Common myeloid progenitor, CD34-positive (primary cell): ENCODE measurements at regions of chr2 and their contacts with region 1.

Region 1: GRCh38 chr2:74876081-74876886 is 42.4 kb downstream of the HK2 start:
- DNase-seq: peak; percentile 61 to 78 (median 74)
- H3K4me3 ChIP-seq: no peak overlapping the region
- H3K27ac ChIP-seq: peak overlapping the region in 1 of 2 experiments; percentile 8
- H3K4me1 ChIP-seq: peaks cover 4 to 14% (median 6%) of the 10 kb centered on the region in 4 experiments
- H3K27me3 ChIP-seq: no peaks in the 10 kb centered on the region

Region 2: GRCh38 chr2:74690571-74690970 is 185.7 kb before region 1 on chr2:
- CTCF ChIA-PET with region 1: interaction called, 74 read pairs
- POLR2A ChIA-PET with region 1: no interaction called
- DNase-seq: peak; percentile 59 to 81 (median 70)
- H3K4me3 ChIP-seq: no peak overlapping the region
- H3K27ac ChIP-seq: no peak overlapping the region
- H3K4me1 ChIP-seq: peaks cover 0 to 11% (median 2%) of the 10 kb centered on the region in 4 experiments
- H3K27me3 ChIP-seq: no peaks in the 10 kb centered on the region

Region 3: GRCh38 chr2:74715078-74715791 is 161.0 kb before region 1 on chr2:
- CTCF ChIA-PET with region 1: interaction called, 132 read pairs
- POLR2A ChIA-PET with region 1: no interaction called
- DNase-seq: peak; percentile 75 to 87 (median 84)
- H3K4me3 ChIP-seq: peak overlapping the region; percentile 27 to 78 (median 71)
- H3K27ac ChIP-seq: no peak overlapping the region
- H3K4me1 ChIP-seq: peaks cover 0 to 9% (median 5%) of the 10 kb centered on the region in 4 experiments
- H3K27me3 ChIP-seq: peaks cover 0 to 6% (median 0%) of the 10 kb centered on the region in 5 experiments

Region 4: GRCh38 chr2:74833418-74834233 is 42.7 kb before region 1 on chr2 and contains the start of gene HK2:
- CTCF ChIA-PET with region 1: interaction called, 15 read pairs
- POLR2A ChIA-PET with region 1: no interaction called
- DNase-seq: peak; percentile 89 to 94 (median 92)
- H3K4me3 ChIP-seq: peak within 1 kb of the TSS; percentile 68 to 90 (median 78)
- H3K27ac ChIP-seq: peak within 1 kb of the TSS in 1 of 2 experiments; percentile 66
- H3K4me1 ChIP-seq: peaks cover 25 to 59% (median 50%) of the 10 kb centered on the region in 4 experiments
- H3K27me3 ChIP-seq: no peaks in the 10 kb centered on the region

Region 5: GRCh38 chr2:74862020-74862964 is 14.0 kb before region 1 on chr2:
- CTCF ChIA-PET with region 1: interaction called, 32 read pairs
- POLR2A ChIA-PET with region 1: no interaction called
- DNase-seq: peak in 2 of 3 donors; percentile 39 to 65
- H3K4me3 ChIP-seq: no peak overlapping the region
- H3K27ac ChIP-seq: no peak overlapping the region
- H3K4me1 ChIP-seq: peaks cover 0 to 71% (median 45%) of the 10 kb centered on the region in 4 experiments
- H3K27me3 ChIP-seq: no peaks in the 10 kb centered on the region